ENCODE measurements at regions of chr13 and their contacts with region 1.

Region 1: GRCh38 chr13:90717451-90717936 is 630.0 kb upstream of the MIR17HG start:
- DNase-seq: no peak
- ATAC-seq: peak in 3 of 8 donors; percentile 30 to 79 (median 33)
- H3K4me3 ChIP-seq: no peak overlapping the region
- H3K27ac ChIP-seq: no peak overlapping the region
- H3K4me1 ChIP-seq: peaks cover 0 to 17% (median 0%) of the 10 kb centered on the region in 9 donors
- H3K27me3 ChIP-seq: no peaks in the 10 kb centered on the region
- CTCF ChIP-seq: no peak

Region 2: DNA sequence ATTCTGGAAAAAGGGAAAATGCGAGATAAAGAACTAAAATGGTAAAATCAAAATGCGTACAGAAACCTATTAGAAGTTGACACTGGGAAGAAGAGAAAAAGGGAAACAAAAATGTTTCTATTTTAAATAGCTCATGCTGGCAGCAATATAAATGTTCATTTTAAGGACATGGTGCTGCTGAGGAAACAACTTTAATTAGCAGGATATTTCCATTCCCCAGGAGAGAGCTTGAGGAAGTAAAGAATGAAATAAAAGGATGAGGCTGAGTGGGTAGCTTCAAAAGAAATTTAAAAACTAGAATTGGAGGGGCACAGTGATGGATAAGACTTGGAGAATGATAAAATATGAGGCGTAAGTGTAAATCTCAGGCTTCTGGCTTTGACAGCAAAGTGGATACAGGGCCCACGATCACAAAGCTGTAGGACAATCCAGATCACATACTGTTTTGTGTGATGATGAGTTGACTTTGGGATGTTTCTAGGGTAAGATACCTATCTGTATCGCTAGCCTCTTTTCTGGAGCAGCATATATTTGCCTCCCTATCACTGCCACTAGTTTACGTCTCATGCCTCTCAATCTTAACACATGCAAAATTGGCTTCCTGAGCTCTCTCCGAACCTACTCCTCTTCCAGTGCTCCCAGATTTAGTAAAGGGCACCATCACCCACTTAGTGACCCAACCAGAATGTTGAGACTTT is 58.7 kb after region 1 on chr13:
- intact Hi-C with region 1: no loop called
- DNase-seq: no peak
- ATAC-seq: no peak
- H3K4me3 ChIP-seq: no peak overlapping the region
- H3K27ac ChIP-seq: no peak overlapping the region
- H3K4me1 ChIP-seq: no peaks in the 10 kb centered on the region
- H3K27me3 ChIP-seq: no peaks in the 10 kb centered on the region
- CTCF ChIP-seq: no peak

Region 3: DNA sequence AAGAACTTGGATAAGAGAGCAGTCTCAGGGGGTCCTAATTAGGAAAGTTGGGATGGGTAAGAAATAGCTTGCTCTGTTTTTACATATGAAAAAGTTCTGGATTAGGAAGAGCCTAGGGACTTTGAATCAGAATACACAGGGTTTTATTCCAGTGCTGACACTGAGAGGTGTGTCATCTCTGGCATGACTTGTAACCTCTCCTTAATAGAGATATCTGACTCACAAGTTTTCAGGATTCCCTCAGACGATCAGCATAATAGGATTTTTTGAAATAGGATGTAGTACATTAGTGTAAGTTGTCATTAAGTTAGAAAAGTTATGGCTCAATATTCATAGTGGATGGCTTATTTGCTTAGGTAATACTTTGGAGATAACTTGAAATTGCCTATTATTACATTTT is 74.8 kb after region 1 on chr13:
- intact Hi-C with region 1: loop called in 1 of 10 experiments (anchors 10 kb)
- DNase-seq: no peak
- ATAC-seq: no peak
- H3K4me3 ChIP-seq: no peak overlapping the region
- H3K27ac ChIP-seq: no peak overlapping the region
- H3K4me1 ChIP-seq: no peaks in the 10 kb centered on the region
- H3K27me3 ChIP-seq: no peaks in the 10 kb centered on the region
- CTCF ChIP-seq: no peak

Measured in heart right ventricle (tissue), 16 donors.